Activated CD4-positive, alpha-beta memory T cell treated with anti-CD3 and anti-CD28 coated beads for 36 hours (primary cell): ENCODE measurements at regions of chr19 and their contacts with region 1.

Region 1: DNA sequence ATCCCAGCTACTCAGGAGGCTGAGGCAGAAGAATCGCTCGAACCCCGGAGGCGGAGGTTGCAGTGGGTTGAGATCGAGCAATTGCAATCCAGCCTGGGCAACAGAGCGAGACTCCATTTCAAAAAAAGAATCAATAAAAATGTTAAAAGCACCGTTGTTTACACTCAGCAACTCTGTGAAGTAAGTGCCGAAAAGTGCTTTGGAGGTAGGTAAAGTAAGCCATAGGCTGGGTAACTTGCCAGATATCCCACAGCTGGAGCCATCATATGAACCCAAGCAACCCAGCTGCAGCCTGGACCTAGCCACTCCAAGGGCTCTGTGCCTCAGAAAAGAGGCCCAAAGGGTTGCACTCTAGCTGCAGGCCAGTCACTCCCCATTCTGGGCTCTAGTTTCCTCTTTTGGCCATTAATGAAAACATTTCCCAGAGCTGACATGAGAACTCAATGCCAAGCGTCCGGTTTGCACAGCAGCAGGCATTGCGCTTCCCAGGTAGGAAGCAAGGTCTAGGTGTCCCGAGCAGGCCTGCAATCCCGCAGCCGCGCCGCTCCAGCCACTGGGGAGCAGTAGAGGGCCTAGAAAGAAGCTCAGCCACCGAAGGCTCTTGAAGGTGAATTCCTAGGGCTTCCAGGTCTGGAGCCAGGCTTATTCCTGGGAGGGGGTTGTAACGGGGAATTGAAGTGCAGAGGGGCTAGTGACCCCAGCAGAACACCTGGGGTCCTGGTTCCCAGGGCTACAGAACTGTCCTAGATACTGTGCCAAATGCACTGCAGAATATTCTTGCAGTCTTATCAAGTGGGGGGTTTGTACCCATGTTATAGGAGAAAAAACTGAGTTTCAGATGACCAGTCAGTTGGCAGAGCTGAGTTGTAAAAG is 4.1 kb upstream of the CD79A start:
- DNase-seq: peak; percentile 80
- H3K4me3 Mint-ChIP-seq: no peak overlapping the region
- H3K27ac Mint-ChIP-seq: peak overlapping the region; percentile 96
- H3K4me1 Mint-ChIP-seq: peaks cover 84% of the 10 kb centered on the region
- H3K27me3 Mint-ChIP-seq: no peaks in the 10 kb centered on the region

Region 2: DNA sequence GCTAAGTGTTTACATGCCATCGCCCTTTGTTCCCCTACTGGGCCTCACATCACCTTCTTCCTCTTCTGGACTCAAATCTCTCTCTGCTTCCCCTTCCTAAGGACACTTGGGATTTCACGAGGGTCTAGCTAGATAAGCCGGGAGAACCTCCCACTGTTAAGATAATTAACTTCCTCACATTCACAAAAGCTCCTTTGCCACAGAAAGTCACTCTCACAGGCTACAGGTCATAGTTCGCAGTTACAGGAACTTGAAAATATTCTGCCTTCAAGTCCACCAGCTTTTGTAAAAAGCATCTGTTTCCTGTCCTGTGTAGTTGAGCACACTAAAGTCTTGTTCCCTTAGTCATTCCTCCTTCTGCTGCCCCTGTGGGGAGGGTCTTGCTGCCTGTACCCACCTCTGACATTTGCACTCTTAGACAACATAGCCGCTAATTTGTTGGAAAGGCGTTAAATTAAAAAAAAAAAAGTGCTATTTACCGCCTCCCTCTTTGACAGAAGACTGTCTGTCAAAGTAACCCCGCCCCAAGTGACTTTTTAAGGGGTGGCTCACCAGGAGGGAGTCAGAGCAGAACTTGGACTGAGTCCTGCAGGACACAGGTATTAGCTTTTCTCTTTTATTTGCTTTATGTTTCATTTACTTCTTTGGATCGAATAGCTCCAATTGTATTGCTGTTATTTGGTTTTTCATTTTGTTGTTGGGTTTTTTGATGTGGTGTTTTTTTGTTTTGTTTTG is 323.9 kb before region 1 on chr19:
- CTCF ChIA-PET with region 1: no interaction called
- POLR2A ChIA-PET with region 1: no interaction called
- intact Hi-C with region 1: loop called (anchors 5 kb)
- DNase-seq: peak; percentile 88
- H3K4me3 Mint-ChIP-seq: peak overlapping the region; percentile 98
- H3K27ac Mint-ChIP-seq: peak overlapping the region; percentile 96
- H3K4me1 Mint-ChIP-seq: peaks cover 61% of the 10 kb centered on the region
- H3K27me3 Mint-ChIP-seq: no peaks in the 10 kb centered on the region

Region 3: GRCh38 chr19:41844601-41845000 is 28.4 kb before region 1 on chr19 and contains the start of gene LYPD4:
- CTCF ChIA-PET with region 1: no interaction called
- POLR2A ChIA-PET with region 1: no interaction called
- intact Hi-C with region 1: no loop called
- DNase-seq: no peak
- H3K4me3 Mint-ChIP-seq: no peak within 1 kb of the TSS
- H3K27ac Mint-ChIP-seq: no peak within 1 kb of the TSS
- H3K4me1 Mint-ChIP-seq: no peaks in the 10 kb centered on the region
- H3K27me3 Mint-ChIP-seq: no peaks in the 10 kb centered on the region
- total RNA-seq, gene LYPD4: not detected

Region 4: DNA sequence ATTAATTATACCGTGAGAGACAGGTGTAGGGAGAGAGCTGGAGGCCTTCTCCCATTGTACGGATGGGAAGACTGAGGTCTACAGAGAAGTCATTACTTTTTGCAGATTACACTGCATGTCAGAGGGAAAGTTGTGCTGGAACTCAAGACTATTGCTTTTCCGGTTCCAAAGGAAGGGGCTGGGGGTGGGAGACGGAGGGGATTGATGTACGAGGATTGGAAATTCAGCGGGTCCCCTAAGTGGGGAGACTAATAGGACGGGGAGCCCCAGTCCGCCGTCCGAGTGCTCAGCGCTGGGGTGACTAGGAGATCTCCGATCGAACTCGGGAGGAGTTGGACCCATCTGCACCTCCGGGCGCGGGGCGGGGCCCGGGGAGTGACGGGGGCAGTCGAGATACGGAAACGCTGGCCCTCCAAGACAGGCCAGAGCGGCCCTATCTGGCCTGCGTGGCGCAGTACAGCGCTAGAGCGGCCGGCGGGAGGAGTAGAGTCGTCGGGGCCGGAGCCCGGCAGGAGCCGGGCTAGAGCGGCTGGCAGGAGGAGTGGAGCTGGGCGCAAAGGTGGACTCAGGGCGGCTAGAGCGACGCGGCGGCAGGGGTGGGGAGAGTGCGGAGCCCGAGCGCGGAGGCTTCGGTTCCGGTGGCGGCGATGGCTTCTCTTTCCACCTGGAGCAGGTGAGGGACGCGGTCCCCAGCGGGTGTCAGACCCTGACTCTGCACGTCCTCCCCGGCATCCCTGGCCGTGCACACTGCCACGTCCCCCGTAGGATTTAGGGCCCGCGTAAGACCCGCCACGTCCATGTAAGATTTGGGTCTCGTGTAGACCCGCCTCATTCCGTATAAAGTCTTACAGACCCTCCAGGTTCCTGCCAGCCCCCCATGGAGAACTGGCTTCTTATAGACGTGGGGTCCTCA is 11.1 kb after region 1 on chr19:
- CTCF ChIA-PET with region 1: interaction called, 119 read pairs
- POLR2A ChIA-PET with region 1: interaction called, 84 read pairs
- intact Hi-C with region 1: loop called (anchors 1 kb)
- DNase-seq: peak; percentile 95
- H3K4me3 Mint-ChIP-seq: peak overlapping the region; percentile 95
- H3K27ac Mint-ChIP-seq: peak overlapping the region; percentile 97
- H3K4me1 Mint-ChIP-seq: peaks cover 59% of the 10 kb centered on the region
- H3K27me3 Mint-ChIP-seq: no peaks in the 10 kb centered on the region

Region 5: DNA sequence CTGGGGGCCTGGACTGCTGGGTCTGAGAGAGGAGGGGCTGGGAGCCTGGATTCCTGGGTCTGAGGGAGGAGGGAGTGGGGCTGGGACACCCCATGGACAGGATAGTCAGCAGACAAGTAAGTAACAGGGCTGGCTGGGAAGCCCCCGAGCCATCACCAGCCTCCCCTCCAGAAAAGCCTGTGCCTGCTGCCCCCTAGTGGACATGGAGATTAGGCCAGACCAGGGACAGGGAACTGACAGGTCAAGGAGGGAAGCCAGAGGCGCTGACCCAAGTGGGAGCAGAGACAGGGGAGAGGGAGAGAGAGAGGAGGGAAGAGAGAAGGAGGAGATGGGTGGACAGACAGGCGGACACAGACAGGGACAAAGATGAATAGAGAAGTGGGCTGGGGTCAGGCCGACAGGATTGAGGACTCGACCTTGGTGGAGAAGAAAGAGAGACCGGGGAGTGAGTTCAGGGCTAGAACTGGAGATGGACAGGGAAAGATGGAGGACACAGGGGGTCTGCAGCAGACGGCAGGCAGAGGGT is 61.9 kb after region 1 on chr19:
- CTCF ChIA-PET with region 1: interaction called, 7 read pairs
- POLR2A ChIA-PET with region 1: interaction called, 4 read pairs
- intact Hi-C with region 1: loop called (anchors 1 kb)
- DNase-seq: peak; percentile 88
- H3K4me3 Mint-ChIP-seq: peak overlapping the region; percentile 4
- H3K27ac Mint-ChIP-seq: peak overlapping the region; percentile 55
- H3K4me1 Mint-ChIP-seq: peaks cover 35% of the 10 kb centered on the region
- H3K27me3 Mint-ChIP-seq: peaks cover 1% of the 10 kb centered on the region

Region 6: GRCh38 chr19:41951686-41952172 is 78.7 kb after region 1 on chr19:
- CTCF ChIA-PET with region 1: interaction called, 46 read pairs
- POLR2A ChIA-PET with region 1: interaction called, 6 read pairs
- intact Hi-C with region 1: loop called (anchors 1 kb)
- DNase-seq: peak; percentile 91
- H3K4me3 Mint-ChIP-seq: no peak overlapping the region
- H3K27ac Mint-ChIP-seq: no peak overlapping the region
- H3K4me1 Mint-ChIP-seq: peaks cover 15% of the 10 kb centered on the region
- H3K27me3 Mint-ChIP-seq: no peaks in the 10 kb centered on the region

Region 7: DNA sequence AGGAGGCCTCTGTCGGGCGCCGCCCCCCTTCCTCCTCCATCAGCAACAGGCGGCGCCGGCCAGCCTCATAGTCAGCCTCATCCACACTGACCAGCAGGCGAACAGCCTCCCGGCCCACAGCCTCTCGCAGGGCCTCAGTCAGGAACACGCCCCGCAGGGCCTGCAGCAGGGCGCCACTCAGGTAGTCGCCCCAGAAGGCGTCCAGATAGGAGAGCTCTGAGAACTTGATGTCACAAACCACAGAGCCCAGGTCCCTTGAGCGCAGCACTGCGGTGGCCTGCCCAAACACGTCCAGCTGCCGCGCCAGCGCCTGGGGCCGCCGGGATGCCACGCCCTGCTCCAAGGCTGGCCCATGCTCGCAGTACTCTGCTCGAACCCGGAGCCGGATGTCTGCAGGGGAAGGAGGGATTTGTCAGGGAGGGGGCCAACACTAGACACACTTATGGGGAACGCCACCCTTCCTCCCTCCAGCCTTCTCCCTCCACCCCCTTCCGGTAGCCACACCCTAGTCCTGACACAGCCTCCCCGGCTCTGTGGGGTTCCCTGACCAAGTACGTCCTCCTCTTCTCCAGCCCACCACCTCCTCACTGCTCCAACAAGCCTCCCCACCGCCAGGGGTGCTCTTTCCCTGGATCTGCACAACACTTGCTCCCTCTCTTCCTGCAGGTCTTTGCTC is 326.6 kb after region 1 on chr19:
- CTCF ChIA-PET with region 1: no interaction called
- POLR2A ChIA-PET with region 1: no interaction called
- intact Hi-C with region 1: loop called (anchors 10 kb)
- DNase-seq: peak; percentile 86
- H3K4me3 Mint-ChIP-seq: peak overlapping the region; percentile 65
- H3K27ac Mint-ChIP-seq: peak overlapping the region; percentile 98
- H3K4me1 Mint-ChIP-seq: peaks cover 80% of the 10 kb centered on the region
- H3K27me3 Mint-ChIP-seq: no peaks in the 10 kb centered on the region